Endothelial cell of umbilical vein (primary cell): ENCODE measurements at regions of chr7 and their contacts with region 1.

Region 1: GRCh38 chr7:120554960-120555571 is 282.1 kb downstream of the KCND2 start:
- DNase-seq: peak; percentile 60
- H3K4me3 ChIP-seq: no peak overlapping the region
- H3K27ac ChIP-seq: no peak overlapping the region
- H3K4me1 ChIP-seq: no peaks in the 10 kb centered on the region
- H3K27me3 ChIP-seq: peaks cover 0 to 7% of the 10 kb centered on the region in 2 experiments
- CTCF ChIP-seq: peak; percentile 57 to 59
- POLR2A ChIP-seq: no peak

Region 2: DNA sequence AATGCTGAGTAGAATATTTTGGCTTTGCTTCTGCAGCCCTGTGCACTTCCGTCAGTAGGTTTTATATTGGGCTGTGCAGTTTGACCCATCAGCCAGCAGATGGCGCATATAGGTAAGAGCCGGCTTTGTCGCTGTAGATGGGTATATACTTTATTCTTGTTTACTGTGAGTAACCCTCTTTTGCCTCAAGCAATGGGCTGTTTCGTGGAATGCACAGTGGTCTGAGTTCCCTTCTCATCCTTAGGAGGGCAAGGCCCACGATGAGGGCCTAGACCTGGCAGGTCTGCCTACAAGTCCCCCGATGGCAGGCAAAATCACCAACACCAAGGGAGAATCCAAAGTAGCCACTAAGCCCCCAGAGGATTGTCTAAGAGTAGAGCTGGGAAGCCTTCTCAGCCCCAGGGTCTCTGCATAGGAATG is 1285.0 kb before region 1 on chr7:
- CTCF ChIA-PET with region 1: interaction called, 10 read pairs
- POLR2A ChIA-PET with region 1: no interaction called
- dilution Hi-C with region 1: no loop called
- intact Hi-C with region 1: loop called (anchors 1 kb)
- DNase-seq: peak; percentile 49
- H3K4me3 ChIP-seq: no peak overlapping the region
- H3K27ac ChIP-seq: no peak overlapping the region
- H3K4me1 ChIP-seq: no peaks in the 10 kb centered on the region
- H3K27me3 ChIP-seq: no peaks in the 10 kb centered on the region
- CTCF ChIP-seq: peak; percentile 78 to 83
- POLR2A ChIP-seq: no peak

Region 3: DNA sequence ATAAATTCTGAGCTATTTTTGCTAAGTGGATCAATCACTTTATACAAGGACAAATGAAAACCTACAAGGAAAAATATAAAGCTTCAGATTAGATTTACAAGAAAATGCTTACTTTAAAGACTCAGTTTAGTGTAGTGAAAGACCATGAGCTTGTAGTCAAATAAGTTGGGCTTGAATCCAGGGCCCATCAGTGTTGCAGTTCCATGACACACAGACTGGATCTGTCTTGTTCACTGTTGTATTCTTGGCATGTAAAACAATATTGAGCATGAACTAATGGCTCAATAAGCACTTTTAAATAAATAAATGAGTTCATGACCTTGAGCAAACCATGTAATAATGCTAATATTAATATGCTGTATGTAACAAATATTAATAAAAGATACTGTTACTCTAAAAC is 446.7 kb before region 1 on chr7:
- CTCF ChIA-PET with region 1: no interaction called
- POLR2A ChIA-PET with region 1: no interaction called
- dilution Hi-C with region 1: no loop called
- intact Hi-C with region 1: no loop called
- DNase-seq: no peak
- H3K4me3 ChIP-seq: no peak overlapping the region
- H3K27ac ChIP-seq: no peak overlapping the region
- H3K4me1 ChIP-seq: no peaks in the 10 kb centered on the region
- H3K27me3 ChIP-seq: no peaks in the 10 kb centered on the region
- CTCF ChIP-seq: no peak
- POLR2A ChIP-seq: no peak

Region 4: GRCh38 chr7:120272261-120272660 is 282.8 kb before region 1 on chr7:
- CTCF ChIA-PET with region 1: interaction called, 8 read pairs
- POLR2A ChIA-PET with region 1: no interaction called
- dilution Hi-C with region 1: no loop called
- intact Hi-C with region 1: loop called (anchors 1 kb)
- DNase-seq: peak; percentile 49
- H3K4me3 ChIP-seq: peak overlapping the region; percentile 33 to 82 (median 59)
- H3K27ac ChIP-seq: no peak overlapping the region
- H3K4me1 ChIP-seq: peaks cover 11% of the 10 kb centered on the region
- H3K27me3 ChIP-seq: peaks cover 14 to 19% of the 10 kb centered on the region in 2 experiments
- CTCF ChIP-seq: peak; percentile 66 to 71
- POLR2A ChIP-seq: no peak

Region 5: GRCh38 chr7:121180436-121181063 is 625.5 kb after region 1 on chr7:
- CTCF ChIA-PET with region 1: no interaction called
- POLR2A ChIA-PET with region 1: no interaction called
- dilution Hi-C with region 1: no loop called
- intact Hi-C with region 1: no loop called
- DNase-seq: no peak
- H3K4me3 ChIP-seq: no peak overlapping the region
- H3K27ac ChIP-seq: no peak overlapping the region
- H3K4me1 ChIP-seq: no peaks in the 10 kb centered on the region
- H3K27me3 ChIP-seq: peaks cover 0 to 7% of the 10 kb centered on the region in 2 experiments
- CTCF ChIP-seq: no peak
- POLR2A ChIP-seq: no peak